ENCODE measurements at regions of chr12 and their contacts with region 1.

Region 1: DNA sequence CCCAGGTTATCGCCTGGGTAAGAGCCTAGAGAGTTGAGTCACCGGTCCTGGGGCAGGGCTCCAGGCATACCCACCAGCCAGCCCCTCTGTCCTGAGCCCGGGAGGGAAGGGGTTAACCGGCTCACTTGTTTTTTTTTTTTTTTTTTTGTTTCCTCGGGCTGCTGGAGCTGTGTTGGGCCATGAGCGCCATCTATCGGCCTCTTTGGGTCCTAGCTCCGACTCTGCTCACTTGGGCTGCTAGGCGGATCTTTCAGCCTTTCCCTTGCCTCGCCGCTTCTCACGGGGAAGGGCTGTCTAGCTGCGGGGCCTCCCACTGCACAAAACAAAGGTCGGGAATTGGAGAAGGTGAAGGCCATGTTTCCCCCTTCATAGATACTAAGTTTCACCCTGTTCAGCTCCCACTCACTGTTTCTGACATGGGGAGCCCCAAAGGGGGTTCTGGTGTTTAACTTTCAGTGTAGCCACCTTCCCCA is 2.8 kb upstream of the SMUG1 start:
- DNase-seq: peak; percentile 60 to 74
- H3K4me3 ChIP-seq: no peak overlapping the region
- H3K27ac ChIP-seq: no peak overlapping the region
- H3K4me1 ChIP-seq: peaks cover 34% of the 10 kb centered on the region
- H3K27me3 ChIP-seq: peaks cover 13% of the 10 kb centered on the region; the same call in 1 of the 2 replicates
- CTCF ChIP-seq: peak; percentile 77

Region 2: DNA sequence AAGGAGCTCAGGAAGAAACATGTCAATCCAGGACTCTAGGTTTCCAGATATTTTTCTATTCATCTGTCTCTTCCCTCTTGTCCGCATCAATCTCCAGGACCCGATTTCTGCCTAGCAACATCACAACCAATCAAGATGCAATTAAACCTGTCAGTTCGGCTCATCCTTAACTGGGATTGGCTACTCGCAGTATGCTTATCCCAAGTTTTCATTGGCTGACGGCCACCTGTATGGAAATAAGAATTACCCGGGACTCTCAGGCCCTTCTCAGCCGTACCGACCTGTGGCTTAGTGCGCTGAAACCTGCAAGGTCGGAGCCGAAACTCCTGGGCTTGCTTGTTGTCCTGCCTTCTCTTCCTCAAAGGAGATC is 495.3 kb before region 1 on chr12:
- CTCF ChIA-PET with region 1: no interaction called
- POLR2A ChIA-PET with region 1: no interaction called
- intact Hi-C with region 1: loop called (anchors 5 kb)
- DNase-seq: peak; percentile 75 to 88
- H3K4me3 ChIP-seq: peak overlapping the region; percentile 40; the same call in 1 of the 2 replicates
- H3K27ac ChIP-seq: peak overlapping the region; percentile 22; the same call in 1 of the 2 replicates
- H3K4me1 ChIP-seq: peaks cover 10% of the 10 kb centered on the region; the same call in 1 of the 2 replicates
- H3K27me3 ChIP-seq: peaks cover 9% of the 10 kb centered on the region; the same call in 1 of the 2 replicates
- CTCF ChIP-seq: no peak

Region 3: DNA sequence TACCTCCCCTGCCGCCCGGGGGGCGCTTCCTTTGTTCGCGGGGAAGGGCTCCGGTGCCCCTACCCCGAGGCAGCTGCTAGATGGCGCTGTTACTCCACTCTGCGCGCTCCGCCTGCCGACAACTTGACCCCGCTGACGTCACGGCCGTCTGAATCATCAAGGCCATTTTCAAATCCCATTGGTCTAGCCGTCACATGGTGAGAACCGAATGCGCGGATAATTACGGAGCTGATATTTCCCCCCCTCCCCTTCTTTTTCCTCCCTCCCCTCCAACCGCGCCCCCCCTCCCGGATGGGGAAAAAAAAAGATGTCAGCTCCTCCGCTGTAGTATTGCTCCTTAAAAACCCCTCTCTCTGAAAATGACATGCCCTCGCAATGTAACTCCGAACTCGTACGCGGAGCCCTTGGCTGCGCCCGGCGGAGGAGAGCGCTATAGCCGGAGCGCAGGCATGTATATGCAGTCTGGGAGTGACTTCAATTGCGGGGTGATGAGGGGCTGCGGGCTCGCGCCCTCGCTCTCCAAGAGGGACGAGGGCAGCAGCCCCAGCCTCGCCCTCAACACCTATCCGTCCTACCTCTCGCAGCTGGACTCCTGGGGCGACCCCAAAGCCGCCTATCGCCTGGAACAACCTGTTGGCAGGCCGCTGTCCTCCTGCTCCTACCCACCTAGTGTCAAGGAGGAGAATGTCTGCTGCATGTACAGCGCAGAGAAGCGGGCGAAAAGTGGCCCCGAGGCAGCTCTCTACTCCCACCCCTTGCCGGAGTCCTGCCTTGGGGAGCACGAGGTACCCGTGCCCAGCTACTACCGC is 206.5 kb before region 1 on chr12 and contains the start of gene HOXC10:
- CTCF ChIA-PET with region 1: interaction called, 10 read pairs
- POLR2A ChIA-PET with region 1: no interaction called
- intact Hi-C with region 1: no loop called
- DNase-seq: peak; percentile 58 to 77
- H3K4me3 ChIP-seq: peak within 1 kb of the TSS; percentile 8; the same call in 1 of the 2 replicates
- H3K27ac ChIP-seq: no peak within 1 kb of the TSS
- H3K4me1 ChIP-seq: peaks cover 22% of the 10 kb centered on the region
- H3K27me3 ChIP-seq: no peaks in the 10 kb centered on the region
- CTCF ChIP-seq: peak; percentile 68
- total RNA-seq, gene HOXC10: 1.1 and 1.4 TPM in 2 replicates

Region 4: DNA sequence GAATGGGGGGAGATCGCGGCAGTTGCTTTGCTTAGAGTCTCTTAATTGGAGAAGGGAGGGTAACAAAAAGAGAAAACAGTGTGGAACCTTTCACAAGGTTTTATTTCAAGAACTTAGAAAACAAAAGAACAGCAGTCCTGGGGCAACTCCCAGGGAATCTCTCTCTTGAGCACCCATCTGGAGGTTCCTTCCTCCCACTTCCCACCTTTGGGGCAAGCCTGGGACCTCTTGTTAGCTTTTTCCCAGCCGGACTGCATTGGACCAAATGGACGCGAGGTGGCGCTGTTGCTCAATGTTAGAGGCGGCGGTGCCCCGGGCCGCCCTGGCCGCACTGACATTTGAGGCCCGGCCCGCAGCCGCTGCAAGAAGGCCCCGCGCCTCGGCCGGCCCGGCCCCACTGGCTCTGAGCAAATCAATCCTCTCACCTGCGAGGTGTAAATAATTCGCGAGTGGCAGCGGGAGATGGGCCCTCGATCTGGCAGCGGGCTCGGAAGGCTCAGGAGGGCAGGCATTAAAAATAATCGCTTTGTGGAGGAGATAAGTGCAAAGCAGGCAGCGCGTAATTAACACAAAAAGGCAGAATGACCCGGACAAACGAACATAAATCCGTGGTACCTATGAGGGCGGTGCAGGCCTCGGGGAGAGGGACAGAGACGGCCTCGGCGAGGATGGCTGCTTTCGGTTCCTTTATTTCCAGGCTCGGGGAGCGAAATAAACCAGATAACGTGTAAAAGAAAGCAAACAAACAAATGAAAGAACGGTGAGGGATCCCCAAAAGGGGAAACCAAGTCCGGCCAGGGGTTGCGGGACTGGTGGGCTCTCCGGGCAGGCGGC is 185.5 kb before region 1 on chr12:
- CTCF ChIA-PET with region 1: interaction called, 8 read pairs
- POLR2A ChIA-PET with region 1: no interaction called
- intact Hi-C with region 1: loop called (anchors 1 kb)
- DNase-seq: peak; percentile 55 to 85
- H3K4me3 ChIP-seq: no peak overlapping the region
- H3K27ac ChIP-seq: no peak overlapping the region
- H3K4me1 ChIP-seq: no peaks in the 10 kb centered on the region
- H3K27me3 ChIP-seq: no peaks in the 10 kb centered on the region
- CTCF ChIP-seq: peak; percentile 94

Region 5: DNA sequence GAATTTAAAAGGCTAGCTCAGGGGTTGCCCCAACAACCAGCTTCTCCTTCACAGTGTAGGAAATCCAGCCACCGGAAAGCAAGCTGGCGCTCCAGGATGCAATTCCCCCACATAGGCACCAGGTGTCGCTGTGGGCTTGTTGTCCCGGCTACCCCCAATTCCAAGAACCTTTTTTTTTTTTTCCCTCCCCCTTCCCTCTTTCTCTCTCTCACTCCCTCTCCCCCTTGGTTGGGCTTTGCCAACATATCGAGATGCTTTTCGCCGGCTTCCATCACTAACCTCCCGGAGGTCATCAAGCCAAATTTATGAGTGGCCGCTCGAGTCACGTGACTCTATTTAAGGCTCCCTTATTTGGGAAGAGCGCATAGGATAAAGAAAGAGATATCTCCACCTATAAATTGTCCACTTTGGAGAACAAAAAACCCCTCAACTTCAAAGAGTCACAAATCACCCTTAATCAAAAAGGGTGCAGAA is 158.9 kb before region 1 on chr12 and contains the start of gene HOXC5:
- CTCF ChIA-PET with region 1: interaction called, 32 read pairs
- POLR2A ChIA-PET with region 1: no interaction called
- intact Hi-C with region 1: loop called (anchors 1 kb)
- DNase-seq: peak; percentile 50 to 68
- H3K4me3 ChIP-seq: peak within 1 kb of the TSS; percentile 47
- H3K27ac ChIP-seq: no peak within 1 kb of the TSS
- H3K4me1 ChIP-seq: 0 out of 2 replicates have a peak, but pooled peaks cover 5% of the 10 kb centered on the region
- H3K27me3 ChIP-seq: no peaks in the 10 kb centered on the region
- CTCF ChIP-seq: peak; percentile 98
- total RNA-seq, gene HOXC5: 0.61 and 1.8 TPM in 2 replicates

Region 6: GRCh38 chr12:54279866-54280467 is 88.4 kb after region 1 on chr12 and contains the start of gene CBX5:
- CTCF ChIA-PET with region 1: interaction called, 10 read pairs
- POLR2A ChIA-PET with region 1: no interaction called
- intact Hi-C with region 1: no loop called
- DNase-seq: peak; percentile 96 to 98
- H3K4me3 ChIP-seq: peak within 1 kb of the TSS; percentile 82
- H3K27ac ChIP-seq: peak within 1 kb of the TSS; percentile 94
- H3K4me1 ChIP-seq: peaks cover 38% of the 10 kb centered on the region
- H3K27me3 ChIP-seq: no peaks in the 10 kb centered on the region
- CTCF ChIP-seq: no peak
- total RNA-seq, gene CBX5: 108 and 154 TPM in 2 replicates

Measured in PC-9 (cell line).